ENCODE measurements at regions of chr15 and their contacts with region 1.

Region 1: DNA sequence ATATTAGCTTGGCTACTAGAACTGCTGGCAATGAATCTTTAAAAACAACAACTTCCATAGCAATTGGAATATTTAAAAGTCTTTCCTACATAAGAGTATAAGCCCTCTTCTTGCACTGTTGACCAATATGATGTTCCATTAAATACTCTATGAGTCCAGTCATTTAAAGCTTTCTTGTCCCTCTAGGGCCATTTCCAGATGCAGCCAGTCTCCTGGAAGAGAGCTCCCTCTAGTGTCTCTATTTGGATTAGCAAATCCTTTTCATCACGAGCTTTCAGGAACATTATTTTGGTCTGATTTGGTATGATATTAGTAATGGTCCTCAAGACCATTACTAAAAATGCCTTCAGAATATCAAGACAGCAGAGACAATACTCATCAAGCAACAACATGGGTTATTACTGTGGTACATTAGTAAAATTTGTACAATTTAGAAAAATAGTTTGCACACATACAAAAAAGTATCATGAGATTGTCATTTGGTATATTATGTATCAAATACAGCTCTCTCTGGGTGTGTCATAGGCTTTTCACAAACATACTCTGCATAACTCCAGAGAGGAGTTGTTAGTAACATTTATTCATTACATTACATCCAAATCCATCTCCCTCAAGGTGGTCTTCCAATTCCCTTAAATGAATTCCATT is 101.3 kb downstream of the DPH6 start:
- DNase-seq: no peak
- H3K4me3 ChIP-seq: no peak overlapping the region
- H3K27ac ChIP-seq: no peak overlapping the region
- H3K4me1 ChIP-seq: no peaks in the 10 kb centered on the region
- H3K27me3 ChIP-seq: no peaks in the 10 kb centered on the region
- CTCF ChIP-seq: peak in 2 of 3 experiments; percentile 70 to 74; a peak in 3 of 4 replicates
- EP300 ChIP-seq: no peak
- POLR2A ChIP-seq: no peak
- RAD21 ChIP-seq: peak; percentile 90 to 92

Region 2: DNA sequence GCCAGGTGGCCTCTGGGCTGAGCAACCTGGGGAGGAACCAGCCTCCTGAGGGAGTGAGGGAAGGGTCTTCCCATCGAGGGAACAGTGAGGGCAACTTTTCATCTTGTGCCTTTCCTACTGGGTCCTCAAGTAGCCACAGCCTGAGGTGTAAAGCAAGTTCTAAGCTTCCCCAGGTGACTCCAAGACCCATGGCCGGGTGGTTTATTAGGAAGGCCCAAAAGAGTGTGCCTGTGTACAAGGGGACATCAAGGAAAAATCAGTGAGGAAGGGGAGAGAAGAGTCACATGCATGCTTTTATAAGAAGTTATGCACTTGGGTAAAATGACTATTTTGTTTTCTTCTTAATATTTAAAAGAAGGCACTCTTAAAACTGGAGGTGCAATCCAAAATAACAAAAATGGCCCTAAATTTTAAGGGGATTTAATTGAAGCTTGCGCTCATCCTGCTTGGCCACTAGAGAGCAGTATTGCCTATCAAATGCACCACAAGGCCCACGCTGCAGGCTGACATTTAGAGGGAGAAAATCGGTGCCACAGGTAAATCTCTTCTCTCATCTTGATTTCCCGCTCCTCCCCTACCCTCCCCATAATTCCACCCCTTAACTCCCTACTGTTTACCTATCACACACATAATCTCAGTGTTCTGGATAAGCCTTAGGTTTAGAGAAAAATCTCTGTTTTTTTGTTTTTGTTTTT is 366.3 kb before region 1 on chr15:
- CTCF ChIA-PET with region 1: interaction called, 71 read pairs
- POLR2A ChIA-PET with region 1: no interaction called
- DNase-seq: no peak
- H3K4me3 ChIP-seq: no peak overlapping the region
- H3K27ac ChIP-seq: 0 out of 2 replicates have a peak overlapping the region, but pooled peaks have one; percentile 4
- H3K4me1 ChIP-seq: no peaks in the 10 kb centered on the region
- H3K27me3 ChIP-seq: no peaks in the 10 kb centered on the region; a peak in 1 of 7 replicates
- CTCF ChIP-seq: peak; percentile 53 to 86 (median 82)
- EP300 ChIP-seq: no peak
- POLR2A ChIP-seq: no peak
- RAD21 ChIP-seq: peak; percentile 98 to 99

Region 3: DNA sequence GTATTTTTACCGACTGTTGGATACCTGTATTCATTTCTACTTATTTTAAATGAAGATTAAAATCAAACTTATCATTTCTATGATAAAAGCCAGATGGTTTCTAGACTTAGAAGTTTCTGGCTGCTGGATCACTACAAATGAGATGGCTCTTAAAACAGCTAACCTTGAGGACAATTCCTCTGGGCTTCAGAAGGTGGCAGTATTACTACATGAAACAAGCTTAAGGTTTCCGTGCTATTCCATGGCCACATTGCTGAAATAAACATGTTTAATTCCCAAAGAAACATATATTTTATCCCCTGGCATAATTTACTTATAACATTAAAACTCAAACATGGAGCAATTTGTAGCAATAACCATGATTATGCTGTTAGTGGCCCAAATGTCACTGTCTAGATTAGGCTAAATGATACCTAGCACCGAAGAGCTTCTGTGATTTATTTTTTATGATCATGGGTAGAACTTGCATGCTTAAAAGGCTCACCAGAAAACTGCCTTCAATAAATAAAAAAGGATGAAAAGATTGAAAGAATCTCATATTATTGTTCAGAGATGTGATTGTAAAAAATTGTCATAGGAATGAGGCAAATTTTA is 155.6 kb before region 1 on chr15:
- CTCF ChIA-PET with region 1: interaction called, 156 read pairs
- POLR2A ChIA-PET with region 1: no interaction called
- DNase-seq: no peak
- H3K4me3 ChIP-seq: no peak overlapping the region
- H3K27ac ChIP-seq: no peak overlapping the region
- H3K4me1 ChIP-seq: peaks cover 0 to 4% (median 0%) of the 10 kb centered on the region in 4 experiments; a peak in 4 of 7 replicates
- H3K27me3 ChIP-seq: no peaks in the 10 kb centered on the region
- CTCF ChIP-seq: peak in 2 of 3 experiments; percentile 63 to 79; a peak in 3 of 4 replicates
- EP300 ChIP-seq: no peak
- POLR2A ChIP-seq: no peak
- RAD21 ChIP-seq: peak; percentile 92 to 94

Region 4: GRCh38 chr15:35299059-35299735 is 145.5 kb before region 1 on chr15:
- CTCF ChIA-PET with region 1: interaction called, 156 read pairs
- POLR2A ChIA-PET with region 1: no interaction called
- DNase-seq: no peak
- H3K4me3 ChIP-seq: no peak overlapping the region
- H3K27ac ChIP-seq: no peak overlapping the region
- H3K4me1 ChIP-seq: no peaks in the 10 kb centered on the region
- H3K27me3 ChIP-seq: no peaks in the 10 kb centered on the region
- CTCF ChIP-seq: no peak
- EP300 ChIP-seq: no peak
- POLR2A ChIP-seq: no peak
- RAD21 ChIP-seq: no peak

Region 5: GRCh38 chr15:35306361-35306981 is 138.2 kb before region 1 on chr15:
- CTCF ChIA-PET with region 1: interaction called, 19 read pairs
- POLR2A ChIA-PET with region 1: no interaction called
- DNase-seq: no peak
- H3K4me3 ChIP-seq: no peak overlapping the region
- H3K27ac ChIP-seq: no peak overlapping the region
- H3K4me1 ChIP-seq: no peaks in the 10 kb centered on the region
- H3K27me3 ChIP-seq: no peaks in the 10 kb centered on the region
- CTCF ChIP-seq: no peak
- EP300 ChIP-seq: no peak
- POLR2A ChIP-seq: no peak
- RAD21 ChIP-seq: no peak

Region 6: GRCh38 chr15:35460616-35461015 is 15.9 kb after region 1 on chr15:
- CTCF ChIA-PET with region 1: interaction called, 14 read pairs
- POLR2A ChIA-PET with region 1: no interaction called
- DNase-seq: no peak
- H3K4me3 ChIP-seq: no peak overlapping the region
- H3K27ac ChIP-seq: no peak overlapping the region
- H3K4me1 ChIP-seq: no peaks in the 10 kb centered on the region
- H3K27me3 ChIP-seq: no peaks in the 10 kb centered on the region
- CTCF ChIP-seq: no peak
- EP300 ChIP-seq: no peak
- POLR2A ChIP-seq: no peak
- RAD21 ChIP-seq: no peak

Region 7: DNA sequence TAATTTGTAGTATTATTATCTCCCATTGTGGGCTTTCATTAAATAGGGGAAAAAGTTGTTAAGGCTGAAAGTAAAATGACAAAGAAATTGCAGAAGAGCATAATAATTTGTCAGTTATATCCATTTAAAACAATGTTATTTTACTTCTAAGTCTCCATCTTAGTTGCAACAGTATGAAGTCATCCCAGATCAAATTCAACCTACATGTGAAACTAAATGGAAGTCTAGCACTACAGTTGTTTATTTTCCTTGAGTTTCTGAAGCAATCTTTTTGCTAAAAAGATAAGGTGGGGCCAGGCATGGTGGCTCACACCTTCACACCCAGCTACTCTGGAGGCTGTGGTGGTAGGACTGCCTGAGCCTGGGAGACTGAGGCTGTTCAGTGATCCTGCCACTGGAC is 21.1 kb after region 1 on chr15:
- CTCF ChIA-PET with region 1: interaction called, 14 read pairs
- POLR2A ChIA-PET with region 1: interaction called, 3 read pairs
- DNase-seq: no peak
- H3K4me3 ChIP-seq: no peak overlapping the region
- H3K27ac ChIP-seq: no peak overlapping the region
- H3K4me1 ChIP-seq: no peaks in the 10 kb centered on the region
- H3K27me3 ChIP-seq: no peaks in the 10 kb centered on the region
- CTCF ChIP-seq: no peak
- EP300 ChIP-seq: no peak
- POLR2A ChIP-seq: no peak
- RAD21 ChIP-seq: no peak